ENCODE measurements at regions of chr2 and their contacts with region 1.

Region 1: DNA sequence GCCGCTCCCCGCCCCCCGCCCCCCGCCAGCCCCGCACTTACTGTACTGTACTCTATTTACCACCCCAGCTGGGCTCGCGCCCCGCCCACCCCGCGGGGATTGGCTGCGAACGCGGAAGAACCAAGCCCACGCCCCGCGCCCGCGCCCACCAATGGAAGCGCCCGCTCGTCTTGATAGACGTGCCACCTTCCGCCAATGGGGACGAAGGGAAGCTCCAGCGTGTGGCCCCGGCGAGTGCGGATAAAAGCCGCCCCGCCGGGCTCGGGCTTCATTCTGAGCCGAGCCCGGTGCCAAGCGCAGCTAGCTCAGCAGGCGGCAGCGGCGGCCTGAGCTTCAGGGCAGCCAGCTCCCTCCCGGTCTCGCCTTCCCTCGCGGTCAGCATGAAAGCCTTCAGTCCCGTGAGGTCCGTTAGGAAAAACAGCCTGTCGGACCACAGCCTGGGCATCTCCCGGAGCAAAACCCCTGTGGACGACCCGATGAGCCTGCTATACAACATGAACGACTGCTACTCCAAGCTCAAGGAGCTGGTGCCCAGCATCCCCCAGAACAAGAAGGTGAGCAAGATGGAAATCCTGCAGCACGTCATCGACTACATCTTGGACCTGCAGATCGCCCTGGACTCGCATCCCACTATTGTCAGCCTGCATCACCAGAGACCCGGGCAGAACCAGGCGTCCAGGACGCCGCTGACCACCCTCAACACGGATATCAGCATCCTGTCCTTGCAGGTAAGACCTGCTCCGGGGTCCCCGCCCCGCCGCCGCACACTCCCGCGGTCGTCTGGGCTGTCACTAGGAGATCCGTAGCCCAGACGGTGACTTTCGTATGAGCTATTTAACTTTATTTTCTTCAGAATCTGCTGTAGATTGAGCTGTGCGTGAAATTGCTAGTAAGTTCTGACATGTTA is at the start of gene ID2:
- DNase-seq: peak; percentile 99
- H3K4me3 Mint-ChIP-seq: peak within 1 kb of the TSS; percentile 96
- H3K27ac Mint-ChIP-seq: peak within 1 kb of the TSS; percentile 94
- H3K4me1 Mint-ChIP-seq: peaks cover 32% of the 10 kb centered on the region
- H3K27me3 Mint-ChIP-seq: peaks cover 10% of the 10 kb centered on the region
- total RNA-seq, gene ID2: 299 to 324 TPM

Region 2: GRCh38 chr2:7672027-7672684 is 1009.9 kb before region 1 on chr2:
- CTCF ChIA-PET with region 1: no interaction called
- POLR2A ChIA-PET with region 1: interaction called, 11 read pairs
- DNase-seq: peak; percentile 66
- H3K4me3 Mint-ChIP-seq: peak overlapping the region; percentile 15
- H3K27ac Mint-ChIP-seq: peak overlapping the region; percentile 83
- H3K4me1 Mint-ChIP-seq: peaks cover 39% of the 10 kb centered on the region
- H3K27me3 Mint-ChIP-seq: no peaks in the 10 kb centered on the region

Region 3: GRCh38 chr2:7730449-7730848 is 951.6 kb before region 1 on chr2:
- CTCF ChIA-PET with region 1: interaction called, 16 read pairs
- POLR2A ChIA-PET with region 1: interaction called, 144 read pairs
- DNase-seq: peak; percentile 51
- H3K4me3 Mint-ChIP-seq: peak overlapping the region; percentile 80
- H3K27ac Mint-ChIP-seq: peak overlapping the region; percentile 94
- H3K4me1 Mint-ChIP-seq: peaks cover 50% of the 10 kb centered on the region
- H3K27me3 Mint-ChIP-seq: no peaks in the 10 kb centered on the region

Region 4: DNA sequence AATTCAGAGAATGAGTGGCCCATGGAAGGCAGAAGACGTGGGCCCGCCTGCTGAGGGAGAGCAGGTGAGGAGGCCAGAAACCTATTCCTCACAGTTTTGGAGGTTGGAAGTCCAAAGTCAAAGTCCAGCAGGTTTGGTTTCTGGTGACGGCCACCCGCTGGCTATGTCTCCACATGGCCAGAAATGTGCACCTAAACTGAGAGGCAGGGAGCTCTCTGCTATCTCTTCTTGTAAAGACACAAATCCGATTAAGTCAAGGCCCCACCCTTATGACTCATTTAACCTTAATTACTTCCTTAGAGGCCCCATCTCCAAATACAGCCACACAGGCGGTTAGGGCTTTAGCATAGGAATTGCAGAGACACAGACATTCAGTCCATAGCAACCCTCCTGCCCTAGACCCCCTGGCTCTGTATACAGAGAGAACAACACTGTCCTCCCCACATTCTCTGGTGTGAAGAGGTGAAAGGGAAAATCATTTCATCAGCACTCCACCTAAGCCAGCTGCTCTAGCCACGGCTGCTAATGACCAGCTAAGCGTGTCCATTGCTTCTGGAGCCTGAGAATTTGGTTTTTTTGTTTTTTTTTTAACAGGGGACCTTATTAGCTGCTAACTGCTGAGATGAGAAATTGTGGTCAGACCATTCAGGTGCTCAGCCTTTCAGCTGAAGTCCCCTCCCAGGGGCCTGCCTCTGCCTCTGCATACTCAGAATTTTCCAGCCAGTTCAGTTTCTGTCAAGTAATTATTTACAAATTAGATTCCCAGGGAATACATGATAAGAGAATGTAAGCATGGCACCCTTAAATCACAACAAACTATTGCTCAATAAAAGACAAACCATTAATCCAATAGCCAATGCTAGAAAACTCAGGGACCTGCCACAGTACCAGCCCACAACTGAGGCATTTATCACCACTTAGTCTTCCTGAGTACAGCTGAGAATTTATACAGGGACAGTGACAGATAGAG is 368.9 kb before region 1 on chr2:
- CTCF ChIA-PET with region 1: interaction called, 3 read pairs
- POLR2A ChIA-PET with region 1: interaction called, 46 read pairs
- DNase-seq: peak; percentile 43
- H3K4me3 Mint-ChIP-seq: peak overlapping the region; percentile 69
- H3K27ac Mint-ChIP-seq: peak overlapping the region; percentile 90
- H3K4me1 Mint-ChIP-seq: peaks cover 77% of the 10 kb centered on the region
- H3K27me3 Mint-ChIP-seq: peaks cover 3% of the 10 kb centered on the region

Region 5: DNA sequence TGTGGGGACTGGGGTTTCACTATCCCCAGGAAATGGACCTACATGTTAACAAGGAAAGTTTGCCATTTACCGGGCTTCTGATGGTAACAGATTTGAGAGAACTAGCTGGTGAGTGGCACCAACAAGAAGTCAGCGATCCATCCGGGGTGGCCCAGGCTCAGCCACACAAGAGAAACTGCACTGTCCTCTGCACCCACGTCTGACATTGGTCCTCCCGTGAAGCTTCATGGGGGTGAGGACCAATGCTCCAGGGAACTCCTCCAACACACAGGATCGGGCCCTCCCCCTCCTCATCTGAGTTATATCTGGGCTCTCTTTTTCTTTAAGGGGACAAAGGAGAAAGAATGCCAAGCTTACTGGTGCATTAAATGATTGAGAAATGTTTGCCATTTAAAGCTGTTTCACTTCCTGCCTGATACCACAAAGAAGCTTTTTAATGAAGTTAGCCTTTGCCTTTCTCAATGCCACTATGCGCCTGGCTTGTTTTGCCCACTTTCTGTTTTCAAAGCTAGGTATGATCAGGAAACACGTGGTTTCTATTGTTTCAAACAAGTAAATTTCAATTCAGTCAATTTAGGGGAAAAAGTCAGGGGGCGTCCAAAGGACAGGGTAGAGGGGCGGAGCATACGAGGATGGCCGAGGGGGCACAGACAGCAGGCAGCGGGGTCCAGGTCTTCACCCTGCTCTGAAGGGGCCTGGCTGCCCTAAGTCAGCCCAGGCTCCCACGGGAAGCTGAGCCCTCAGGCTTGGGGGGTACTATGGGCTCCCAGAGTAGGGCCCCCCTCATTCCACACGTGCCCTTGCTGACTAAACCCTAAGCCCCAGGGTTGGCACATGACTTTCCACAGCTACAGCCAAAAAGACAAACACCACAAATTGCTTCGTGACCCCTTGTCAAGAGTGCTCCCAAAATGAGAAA is 204.2 kb before region 1 on chr2:
- CTCF ChIA-PET with region 1: interaction called, 5 read pairs
- POLR2A ChIA-PET with region 1: interaction called, 122 read pairs
- DNase-seq: peak; percentile 56
- H3K4me3 Mint-ChIP-seq: peak overlapping the region; percentile 58
- H3K27ac Mint-ChIP-seq: peak overlapping the region; percentile 96
- H3K4me1 Mint-ChIP-seq: peaks cover 93% of the 10 kb centered on the region
- H3K27me3 Mint-ChIP-seq: no peaks in the 10 kb centered on the region

Region 6: DNA sequence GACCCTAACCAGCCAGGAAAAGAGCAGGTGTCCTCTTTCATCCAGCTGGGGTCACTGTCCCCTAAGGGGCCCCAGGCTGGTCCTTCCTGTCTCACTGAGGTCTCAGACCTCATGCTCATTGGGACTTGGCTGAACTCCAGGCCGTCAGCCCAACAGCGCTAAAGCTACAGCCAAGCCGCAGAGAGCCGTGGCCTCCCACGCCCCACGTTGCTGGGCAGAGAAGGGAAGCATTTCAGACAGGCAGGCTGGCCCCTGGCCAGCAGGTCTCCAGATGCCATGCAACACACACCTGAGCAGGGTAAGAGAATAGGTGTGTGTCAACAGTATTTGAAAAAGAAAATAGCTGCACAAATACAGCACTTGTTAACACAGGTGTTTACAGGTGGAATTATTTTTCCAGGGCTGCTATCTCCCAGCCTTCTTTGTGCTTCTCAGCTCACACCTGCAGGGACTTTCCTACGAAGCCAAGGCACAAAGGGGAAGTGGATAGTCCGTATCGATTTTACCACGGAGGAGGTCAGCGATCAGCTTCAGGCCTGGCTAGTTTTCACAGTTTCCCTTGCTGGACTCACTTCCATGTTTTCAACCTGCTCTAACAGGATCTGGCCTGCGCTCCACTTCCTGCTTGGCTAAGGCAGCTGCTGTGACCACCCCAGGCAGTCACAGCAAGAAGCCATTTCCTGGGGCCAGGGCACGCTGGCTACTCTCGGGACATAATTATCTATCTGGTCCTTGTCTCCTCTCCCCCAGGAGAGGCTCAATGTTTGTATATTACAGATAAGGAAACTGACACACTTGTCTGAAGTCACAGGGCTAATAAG is 156.2 kb before region 1 on chr2:
- CTCF ChIA-PET with region 1: interaction called, 8 read pairs
- POLR2A ChIA-PET with region 1: interaction called, 24 read pairs
- DNase-seq: no peak
- H3K4me3 Mint-ChIP-seq: no peak overlapping the region
- H3K27ac Mint-ChIP-seq: no peak overlapping the region
- H3K4me1 Mint-ChIP-seq: peaks cover 58% of the 10 kb centered on the region
- H3K27me3 Mint-ChIP-seq: peaks cover 3% of the 10 kb centered on the region

Region 7: GRCh38 chr2:8836971-8837794 is 155.1 kb after region 1 on chr2 and contains the start of gene KIDINS220:
- CTCF ChIA-PET with region 1: no interaction called
- POLR2A ChIA-PET with region 1: interaction called, 10 read pairs
- DNase-seq: peak; percentile 88
- H3K4me3 Mint-ChIP-seq: peak within 1 kb of the TSS; percentile 98
- H3K27ac Mint-ChIP-seq: peak within 1 kb of the TSS; percentile 95
- H3K4me1 Mint-ChIP-seq: peaks cover 36% of the 10 kb centered on the region
- H3K27me3 Mint-ChIP-seq: no peaks in the 10 kb centered on the region
- total RNA-seq, gene KIDINS220: 33.4 to 35.1 TPM

Measured in activated CD4-positive, alpha-beta memory T cell treated with anti-CD3 and anti-CD28 coated beads, Interleukin-2, amount 10 ng/mL, durations not matched to agents 7 days and 5 days (primary cell).